ENCODE measurements at regions of chr1 and their contacts with region 1.

Region 1: DNA sequence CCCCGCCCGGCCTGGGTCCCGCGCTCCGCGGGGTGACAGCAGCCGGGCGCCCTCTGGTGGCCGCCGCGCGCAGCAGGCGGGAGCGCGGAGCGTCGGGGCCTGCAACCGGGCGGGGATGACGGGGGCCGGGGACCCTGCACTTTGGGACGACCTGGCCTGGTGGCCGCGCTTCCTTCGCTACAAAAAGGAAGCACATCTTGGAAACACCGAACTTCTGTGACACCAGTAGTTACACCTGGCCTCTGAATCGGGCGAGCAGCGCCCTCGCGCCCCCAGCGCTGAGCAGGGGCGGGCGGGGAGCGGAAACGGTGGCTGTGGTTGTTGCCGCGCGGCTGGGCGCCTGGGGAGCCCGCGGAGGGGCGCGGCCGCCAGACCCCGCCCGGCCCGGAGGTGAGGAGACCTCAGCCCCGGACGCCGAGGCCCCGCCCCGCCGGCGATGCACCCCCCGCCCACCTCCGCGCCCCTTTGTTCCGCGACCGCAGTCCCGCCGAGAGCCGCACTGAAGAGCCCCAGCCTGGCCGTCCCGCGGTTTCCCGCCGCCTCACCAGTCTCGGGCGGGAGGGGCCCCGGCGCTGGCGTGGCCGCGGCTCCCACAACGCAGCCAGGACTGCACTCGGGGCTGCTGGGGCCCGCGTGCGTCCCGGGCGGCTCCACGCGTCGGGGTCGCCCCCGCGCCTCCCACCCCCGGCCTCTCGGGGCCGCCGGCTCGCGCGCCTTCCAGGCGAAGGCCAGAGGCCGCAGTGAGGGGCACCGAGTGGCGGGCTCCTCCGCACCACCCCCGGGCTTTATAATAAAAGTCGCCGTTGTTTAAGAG is 59.3 kb downstream of the H3-3A start:
- DNase-seq: peak; percentile 94
- ATAC-seq: peak; percentile 72
- H3K4me3 ChIP-seq: peak overlapping the region in 4 of 5 experiments; percentile 59 to 74 (median 62)
- H3K4me3 Mint-ChIP-seq: peak overlapping the region; percentile 90
- H3K27ac ChIP-seq: peak overlapping the region; percentile 96 to 97
- H3K27ac Mint-ChIP-seq: peak overlapping the region; percentile 99
- H3K4me1 ChIP-seq: peaks cover 68 to 75% of the 10 kb centered on the region in 2 donors
- H3K4me1 Mint-ChIP-seq: peaks cover 76% of the 10 kb centered on the region
- H3K27me3 ChIP-seq: no peaks in the 10 kb centered on the region
- H3K27me3 Mint-ChIP-seq: no peaks in the 10 kb centered on the region
- CTCF ChIP-seq: peak; percentile 79

Region 2: DNA sequence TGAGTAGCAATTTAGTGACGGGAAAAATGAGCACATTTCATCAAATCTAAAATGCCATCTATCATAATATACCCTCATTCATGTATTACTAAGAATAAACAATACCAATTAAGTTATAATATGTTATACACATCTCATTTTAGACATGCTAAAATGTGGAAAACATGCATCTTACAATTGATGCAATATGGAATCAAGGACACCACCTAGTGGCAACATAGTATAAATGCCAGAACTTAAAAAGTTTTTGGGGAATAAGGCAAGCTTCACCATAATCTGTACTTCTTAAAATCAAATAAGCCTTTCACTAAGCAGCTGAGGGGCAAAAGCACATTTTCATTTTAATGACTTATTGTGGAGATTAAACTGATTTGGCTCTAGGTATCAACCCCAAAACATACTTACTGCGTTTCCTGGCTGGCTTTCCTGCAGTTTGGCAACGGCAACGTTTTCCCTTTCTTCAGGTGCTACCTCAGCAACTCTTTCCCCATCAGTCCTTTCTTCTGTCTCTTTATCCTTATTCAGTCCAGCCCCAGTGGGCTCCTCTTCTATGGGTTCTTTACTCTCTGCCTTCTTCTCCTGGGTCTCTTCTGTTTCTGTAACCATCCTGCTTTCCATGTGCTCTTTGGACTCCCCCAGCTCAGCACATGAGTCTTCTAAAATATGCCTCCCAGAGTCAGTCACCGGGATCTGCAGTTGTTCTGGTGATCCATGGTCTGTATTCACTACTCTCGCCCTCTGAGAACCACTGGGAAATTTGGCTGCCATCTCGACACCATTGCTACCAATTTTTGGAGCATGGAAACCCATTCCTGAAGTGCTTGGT is 134.1 kb before region 1 on chr1:
- CTCF ChIA-PET with region 1: interaction called, 27 read pairs
- POLR2A ChIA-PET with region 1: no interaction called
- intact Hi-C with region 1: no loop called
- DNase-seq: peak; percentile 61
- ATAC-seq: peak; percentile 67
- H3K4me3 ChIP-seq: no peak overlapping the region
- H3K4me3 Mint-ChIP-seq: no peak overlapping the region
- H3K27ac ChIP-seq: no peak overlapping the region
- H3K27ac Mint-ChIP-seq: peak overlapping the region; percentile 37
- H3K4me1 ChIP-seq: peaks cover 0 to 4% of the 10 kb centered on the region in 2 donors
- H3K4me1 Mint-ChIP-seq: peaks cover 25% of the 10 kb centered on the region
- H3K27me3 ChIP-seq: no peaks in the 10 kb centered on the region
- H3K27me3 Mint-ChIP-seq: no peaks in the 10 kb centered on the region
- CTCF ChIP-seq: peak; percentile 87

Region 3: GRCh38 chr1:226019572-226019971 is 102.2 kb before region 1 on chr1:
- CTCF ChIA-PET with region 1: no interaction called
- POLR2A ChIA-PET with region 1: no interaction called
- intact Hi-C with region 1: no loop called
- DNase-seq: no peak
- ATAC-seq: no peak
- H3K4me3 ChIP-seq: no peak overlapping the region
- H3K4me3 Mint-ChIP-seq: no peak overlapping the region
- H3K27ac ChIP-seq: no peak overlapping the region
- H3K27ac Mint-ChIP-seq: no peak overlapping the region
- H3K4me1 ChIP-seq: no peaks in the 10 kb centered on the region
- H3K4me1 Mint-ChIP-seq: peaks cover 4% of the 10 kb centered on the region
- H3K27me3 ChIP-seq: no peaks in the 10 kb centered on the region
- H3K27me3 Mint-ChIP-seq: no peaks in the 10 kb centered on the region
- CTCF ChIP-seq: no peak

Region 4: DNA sequence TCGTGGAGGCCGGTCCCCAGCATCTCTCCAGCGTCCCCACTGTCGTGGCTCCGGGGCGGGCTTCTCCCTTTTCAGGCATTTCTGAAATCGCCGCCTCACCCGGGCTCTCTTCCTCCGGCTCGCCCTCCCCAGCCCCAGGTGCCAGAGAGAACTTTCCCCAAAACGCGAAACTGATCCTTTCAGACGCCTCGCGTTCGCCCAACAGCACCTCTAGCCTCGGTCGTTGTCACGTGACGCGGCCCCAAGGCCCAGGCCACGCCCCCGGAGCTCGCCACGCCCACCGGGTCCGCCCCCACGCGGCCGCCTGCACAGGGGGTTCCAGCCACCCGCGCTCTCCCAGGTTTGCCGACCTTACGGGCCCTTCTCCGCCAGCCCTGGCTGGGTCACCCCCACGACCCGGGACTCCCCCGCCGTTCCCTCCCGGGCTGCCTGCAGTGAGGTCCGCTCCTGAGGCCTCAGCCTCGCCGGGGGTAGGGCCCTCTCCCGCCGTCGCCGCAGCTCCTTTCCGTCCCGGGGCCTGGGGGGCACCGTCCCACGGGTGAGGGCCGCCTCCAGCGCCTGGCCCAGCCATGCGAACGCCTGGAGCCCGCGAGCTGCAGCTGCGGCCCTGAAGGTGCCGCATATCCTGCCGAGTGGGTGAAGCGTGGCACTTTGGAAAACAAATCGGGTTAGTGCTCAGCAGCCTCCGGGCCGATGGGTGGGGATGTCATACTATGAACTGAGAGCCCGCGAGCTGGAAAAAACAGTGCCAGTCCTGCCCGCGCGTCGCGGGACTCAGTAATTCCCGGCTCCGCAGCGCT is 38.3 kb before region 1 on chr1:
- CTCF ChIA-PET with region 1: interaction called, 5 read pairs
- POLR2A ChIA-PET with region 1: interaction called, 15 read pairs
- intact Hi-C with region 1: loop called (anchors 1 kb)
- DNase-seq: peak; percentile 94
- ATAC-seq: peak; percentile 94
- H3K4me3 ChIP-seq: peak overlapping the region; percentile 15 to 83 (median 73)
- H3K4me3 Mint-ChIP-seq: peak overlapping the region; percentile 91
- H3K27ac ChIP-seq: peak overlapping the region; percentile 13 to 71
- H3K27ac Mint-ChIP-seq: peak overlapping the region; percentile 87
- H3K4me1 ChIP-seq: peaks cover 6 to 19% of the 10 kb centered on the region in 2 donors
- H3K4me1 Mint-ChIP-seq: peaks cover 13% of the 10 kb centered on the region
- H3K27me3 ChIP-seq: no peaks in the 10 kb centered on the region
- H3K27me3 Mint-ChIP-seq: no peaks in the 10 kb centered on the region
- CTCF ChIP-seq: no peak

Region 5: DNA sequence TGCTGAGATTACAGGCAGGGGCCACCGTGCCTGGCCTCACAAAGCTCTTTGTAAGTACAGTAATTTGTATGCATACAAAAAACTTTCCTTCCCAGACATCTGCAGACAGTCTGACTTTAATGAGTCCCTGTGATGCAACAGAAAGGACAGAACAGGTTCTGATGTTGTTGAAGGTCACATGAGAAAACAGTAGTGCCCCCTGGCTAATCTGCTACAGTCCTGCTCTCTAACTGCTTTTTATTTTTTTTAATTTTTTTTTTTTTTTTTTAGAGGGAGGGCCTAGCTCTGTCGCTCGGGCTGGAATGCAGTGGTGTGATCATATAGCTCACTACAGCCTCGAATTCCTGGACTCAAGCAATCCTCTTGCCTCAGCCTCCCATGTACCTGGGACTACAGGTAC is 28.0 kb after region 1 on chr1:
- CTCF ChIA-PET with region 1: interaction called, 55 read pairs
- POLR2A ChIA-PET with region 1: interaction called, 3 read pairs
- intact Hi-C with region 1: loop called (anchors 2 kb)
- DNase-seq: peak; percentile 30
- ATAC-seq: peak; percentile 56
- H3K4me3 ChIP-seq: no peak overlapping the region
- H3K4me3 Mint-ChIP-seq: no peak overlapping the region
- H3K27ac ChIP-seq: no peak overlapping the region
- H3K27ac Mint-ChIP-seq: peak overlapping the region; percentile 85
- H3K4me1 ChIP-seq: peaks cover 18 to 26% of the 10 kb centered on the region in 2 donors
- H3K4me1 Mint-ChIP-seq: peaks cover 44% of the 10 kb centered on the region
- H3K27me3 ChIP-seq: no peaks in the 10 kb centered on the region
- H3K27me3 Mint-ChIP-seq: no peaks in the 10 kb centered on the region
- CTCF ChIP-seq: no peak

Region 6: GRCh38 chr1:226186124-226187018 is 64.6 kb after region 1 on chr1 and contains the start of gene ACBD3:
- CTCF ChIA-PET with region 1: interaction called, 402 read pairs
- POLR2A ChIA-PET with region 1: interaction called, 13 read pairs
- intact Hi-C with region 1: loop called (anchors 1 kb)
- DNase-seq: peak; percentile 92
- ATAC-seq: peak; percentile 89
- H3K4me3 ChIP-seq: peak within 1 kb of the TSS; percentile 58 to 94 (median 70)
- H3K4me3 Mint-ChIP-seq: peak within 1 kb of the TSS; percentile 96
- H3K27ac ChIP-seq: peak within 1 kb of the TSS; percentile 86 to 96
- H3K27ac Mint-ChIP-seq: peak within 1 kb of the TSS; percentile 95
- H3K4me1 ChIP-seq: peaks cover 42 to 52% of the 10 kb centered on the region in 2 donors
- H3K4me1 Mint-ChIP-seq: peaks cover 41% of the 10 kb centered on the region
- H3K27me3 ChIP-seq: no peaks in the 10 kb centered on the region
- H3K27me3 Mint-ChIP-seq: no peaks in the 10 kb centered on the region
- CTCF ChIP-seq: no peak
- total RNA-seq, gene ACBD3: 60.6 and 73.9 TPM in 2 replicates

Region 7: DNA sequence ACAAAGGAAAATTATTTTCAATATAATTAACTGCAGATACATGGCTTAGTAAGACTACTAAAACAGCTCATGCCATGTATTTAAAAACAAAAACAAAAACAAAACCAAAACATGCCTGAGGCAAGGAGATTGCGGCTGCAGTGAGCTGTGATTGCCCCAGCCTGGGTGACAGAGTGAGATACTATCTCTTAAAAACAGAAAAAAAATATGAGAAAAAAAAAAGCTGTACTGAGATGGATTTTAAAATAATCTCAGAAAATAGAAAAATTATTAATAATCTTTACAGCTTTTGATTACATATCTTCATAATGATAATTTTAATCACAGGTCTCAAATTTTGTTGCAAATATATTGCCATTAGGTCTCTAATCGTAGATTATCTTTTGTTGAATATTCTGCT is 211.2 kb after region 1 on chr1:
- CTCF ChIA-PET with region 1: interaction called, 83 read pairs
- POLR2A ChIA-PET with region 1: interaction called, 7 read pairs
- intact Hi-C with region 1: no loop called
- DNase-seq: no peak
- ATAC-seq: no peak
- H3K4me3 ChIP-seq: peak overlapping the region in 1 of 5 experiments; percentile 25
- H3K4me3 Mint-ChIP-seq: peak overlapping the region; percentile 27
- H3K27ac ChIP-seq: no peak overlapping the region
- H3K27ac Mint-ChIP-seq: peak overlapping the region; percentile 38
- H3K4me1 ChIP-seq: peaks cover 0 to 7% of the 10 kb centered on the region in 2 donors
- H3K4me1 Mint-ChIP-seq: peaks cover 7% of the 10 kb centered on the region
- H3K27me3 ChIP-seq: no peaks in the 10 kb centered on the region
- H3K27me3 Mint-ChIP-seq: no peaks in the 10 kb centered on the region
- CTCF ChIP-seq: no peak

Measured in B cell (primary cell).